Activated naive CD4-positive, alpha-beta T cell treated with anti-CD3 and anti-CD28 coated beads for 36 hours (primary cell): ENCODE measurements at regions of chr5 and their contacts with region 1.

Region 1: GRCh38 chr5:102755686-102756371 is 724 bp downstream of the PAM start:
- DNase-seq: peak; percentile 88
- H3K4me3 Mint-ChIP-seq: peak overlapping the region; percentile 93
- H3K27ac Mint-ChIP-seq: peak overlapping the region; percentile 93
- H3K4me1 Mint-ChIP-seq: peaks cover 52% of the 10 kb centered on the region
- H3K27me3 Mint-ChIP-seq: peaks cover 17% of the 10 kb centered on the region

Region 2: GRCh38 chr5:102767862-102768261 is 12.0 kb after region 1 on chr5:
- CTCF ChIA-PET with region 1: interaction called, 11 read pairs
- intact Hi-C with region 1: no loop called
- DNase-seq: peak; percentile 49
- H3K4me3 Mint-ChIP-seq: no peak overlapping the region
- H3K27ac Mint-ChIP-seq: peak overlapping the region; percentile 74
- H3K4me1 Mint-ChIP-seq: peaks cover 59% of the 10 kb centered on the region
- H3K27me3 Mint-ChIP-seq: no peaks in the 10 kb centered on the region

Region 3: GRCh38 chr5:103119765-103120606 is 364.2 kb after region 1 on chr5 and contains the starts of genes GIN1 and PPIP5K2:
- CTCF ChIA-PET with region 1: no interaction called
- intact Hi-C with region 1: loop called (anchors 1 kb)
- DNase-seq: peak; percentile 98
- H3K4me3 Mint-ChIP-seq: peak within 1 kb of the TSS; percentile 96
- H3K27ac Mint-ChIP-seq: peak within 1 kb of the TSS; percentile 100
- H3K4me1 Mint-ChIP-seq: peaks cover 38% of the 10 kb centered on the region
- H3K27me3 Mint-ChIP-seq: no peaks in the 10 kb centered on the region
- total RNA-seq, gene GIN1: 11.0 to 13.0 TPM
- total RNA-seq, gene PPIP5K2: 35.8 to 45.0 TPM

Region 4: DNA sequence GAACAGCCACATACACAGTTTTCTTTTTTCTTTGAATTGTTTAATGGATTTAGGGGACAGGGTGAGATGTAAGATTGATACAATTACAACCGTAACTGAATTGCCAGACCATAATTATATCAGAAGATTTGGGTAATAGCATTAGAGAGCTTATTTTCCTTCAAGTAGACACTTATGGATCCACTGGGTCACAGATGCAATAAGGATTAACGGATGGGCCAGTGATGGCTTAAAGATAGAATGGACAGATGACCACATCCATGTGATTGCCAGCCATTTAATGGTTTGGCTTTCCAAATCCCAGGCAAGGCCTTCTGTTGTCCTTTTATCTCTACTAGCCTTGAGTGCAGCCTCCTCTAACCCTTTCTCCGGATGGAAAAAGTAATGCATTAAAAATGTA is 901.5 kb after region 1 on chr5:
- CTCF ChIA-PET with region 1: no interaction called
- intact Hi-C with region 1: no loop called
- DNase-seq: no peak
- H3K4me3 Mint-ChIP-seq: no peak overlapping the region
- H3K27ac Mint-ChIP-seq: no peak overlapping the region
- H3K4me1 Mint-ChIP-seq: no peaks in the 10 kb centered on the region
- H3K27me3 Mint-ChIP-seq: no peaks in the 10 kb centered on the region